ENCODE measurements at regions of chr16 and their contacts with region 1.

Region 1: GRCh38 chr16:2777231-2777902 is at the start of gene ELOB:
- DNase-seq: peak; percentile 46 to 88
- H3K4me3 ChIP-seq: peak within 1 kb of the TSS; percentile 78
- H3K27ac ChIP-seq: peak within 1 kb of the TSS; percentile 94
- H3K4me1 ChIP-seq: peaks cover 20% of the 10 kb centered on the region
- H3K27me3 ChIP-seq: no peaks in the 10 kb centered on the region
- CTCF ChIP-seq: no peak
- total RNA-seq, gene ELOB: 259 and 401 TPM in 2 replicates

Region 2: GRCh38 chr16:1913327-1914083 is 863.9 kb before region 1 on chr16:
- CTCF ChIA-PET with region 1: no interaction called
- POLR2A ChIA-PET with region 1: no interaction called
- intact Hi-C with region 1: no loop called
- DNase-seq: peak; percentile 72 to 80
- H3K4me3 ChIP-seq: no peak overlapping the region
- H3K27ac ChIP-seq: no peak overlapping the region
- H3K4me1 ChIP-seq: peaks cover 34% of the 10 kb centered on the region
- H3K27me3 ChIP-seq: 0 out of 2 replicates have a peak, but pooled peaks cover 5% of the 10 kb centered on the region
- CTCF ChIP-seq: no peak

Region 3: DNA sequence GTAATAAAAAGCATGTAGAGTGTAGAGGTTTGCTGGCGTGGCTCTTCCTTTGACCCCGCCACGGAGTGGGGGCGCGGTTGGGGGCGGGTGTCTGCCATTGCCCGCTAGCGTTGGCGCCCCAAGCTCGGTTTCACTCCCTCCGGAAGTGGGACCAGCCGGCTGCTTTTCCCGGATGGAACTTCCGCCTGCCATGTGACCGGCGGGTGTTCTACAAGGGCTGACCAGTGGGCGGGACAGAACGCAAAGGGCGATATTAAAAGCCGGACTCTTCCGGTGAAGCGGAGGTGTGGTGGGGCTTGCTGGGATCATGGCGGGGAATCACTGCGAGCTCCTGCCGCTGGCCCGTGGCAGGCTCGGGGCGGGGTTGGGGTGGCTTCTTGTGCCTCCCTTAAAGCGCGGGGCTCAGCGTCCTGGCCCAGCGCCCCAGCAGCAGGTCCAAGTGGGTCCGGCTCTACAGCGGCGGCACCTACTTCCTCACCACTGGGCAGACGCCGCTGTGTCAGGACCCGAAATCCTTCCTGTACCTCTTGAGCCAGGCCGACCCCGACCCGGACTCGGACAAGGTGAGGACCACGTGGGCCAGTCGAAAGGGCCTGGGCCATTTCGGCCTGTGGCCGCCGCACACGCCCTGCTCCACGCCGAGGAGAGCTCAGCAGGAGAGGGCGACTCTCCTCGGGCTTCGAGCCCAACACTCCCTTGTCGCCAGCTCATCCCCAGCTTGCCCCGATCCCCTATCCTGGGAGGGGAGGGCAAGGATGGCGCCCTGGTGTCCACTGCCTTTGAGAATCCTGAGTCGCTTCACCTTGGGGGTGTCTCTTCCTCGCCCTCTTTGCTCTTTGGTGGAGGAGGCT is 174.0 kb before region 1 on chr16:
- CTCF ChIA-PET with region 1: no interaction called
- POLR2A ChIA-PET with region 1: no interaction called
- intact Hi-C with region 1: no loop called
- DNase-seq: peak; percentile 92 to 98
- H3K4me3 ChIP-seq: peak overlapping the region; percentile 79
- H3K27ac ChIP-seq: peak overlapping the region; percentile 56
- H3K4me1 ChIP-seq: peaks cover 7% of the 10 kb centered on the region
- H3K27me3 ChIP-seq: no peaks in the 10 kb centered on the region
- CTCF ChIP-seq: no peak

Region 4: DNA sequence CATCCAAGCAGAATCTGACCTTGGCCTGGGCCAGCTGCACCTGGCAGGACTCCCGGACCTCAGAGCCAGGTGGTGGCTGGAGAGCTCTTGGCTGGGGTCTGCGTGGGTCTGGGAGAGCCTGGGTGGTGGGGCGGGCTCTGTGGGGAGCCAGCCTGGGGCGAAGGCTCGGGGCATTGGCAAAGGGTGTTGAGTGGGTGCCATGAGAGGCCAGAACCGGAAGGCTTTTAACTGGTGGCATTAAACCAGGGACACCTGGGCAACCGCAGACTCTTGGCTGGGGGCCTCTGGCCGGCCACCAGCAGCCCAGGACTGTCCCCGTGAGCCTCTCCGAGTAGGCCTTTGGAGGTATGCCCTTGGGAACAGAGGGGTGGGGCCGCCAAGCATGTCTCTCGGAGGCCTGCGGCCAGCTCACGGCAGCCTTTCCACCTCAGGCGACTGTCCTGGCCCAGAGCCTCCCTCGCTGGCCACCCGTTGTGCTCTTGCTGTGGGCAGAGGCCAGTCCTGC is 74.1 kb before region 1 on chr16:
- CTCF ChIA-PET with region 1: no interaction called
- POLR2A ChIA-PET with region 1: no interaction called
- intact Hi-C with region 1: no loop called
- DNase-seq: no peak
- H3K4me3 ChIP-seq: no peak overlapping the region
- H3K27ac ChIP-seq: no peak overlapping the region
- H3K4me1 ChIP-seq: no peaks in the 10 kb centered on the region
- H3K27me3 ChIP-seq: no peaks in the 10 kb centered on the region
- CTCF ChIP-seq: no peak

Region 5: DNA sequence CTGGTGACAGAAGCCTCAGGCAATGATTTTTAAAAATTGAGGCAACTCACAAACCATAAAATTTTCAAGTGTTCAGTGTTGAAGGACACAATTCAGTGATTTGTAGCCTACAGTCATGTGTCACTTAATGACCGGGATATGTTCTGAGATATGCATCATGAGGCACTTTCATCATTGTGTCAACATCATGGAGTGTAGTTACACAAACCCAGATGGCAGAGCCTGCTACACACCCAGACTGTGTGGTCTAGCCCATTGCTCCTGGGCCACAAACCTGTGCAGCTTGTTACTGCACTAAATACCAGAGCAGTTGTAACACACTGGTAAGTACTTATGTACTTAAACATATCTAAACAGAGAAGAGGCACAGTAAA is 22.5 kb after region 1 on chr16:
- CTCF ChIA-PET with region 1: no interaction called
- POLR2A ChIA-PET with region 1: interaction called, 5 read pairs
- intact Hi-C with region 1: loop called (anchors 2 kb)
- DNase-seq: peak in 1 of 2 experiments; percentile 87
- H3K4me3 ChIP-seq: no peak overlapping the region
- H3K27ac ChIP-seq: peak overlapping the region; percentile 27
- H3K4me1 ChIP-seq: peaks cover 36% of the 10 kb centered on the region
- H3K27me3 ChIP-seq: no peaks in the 10 kb centered on the region
- CTCF ChIP-seq: no peak

Region 6: DNA sequence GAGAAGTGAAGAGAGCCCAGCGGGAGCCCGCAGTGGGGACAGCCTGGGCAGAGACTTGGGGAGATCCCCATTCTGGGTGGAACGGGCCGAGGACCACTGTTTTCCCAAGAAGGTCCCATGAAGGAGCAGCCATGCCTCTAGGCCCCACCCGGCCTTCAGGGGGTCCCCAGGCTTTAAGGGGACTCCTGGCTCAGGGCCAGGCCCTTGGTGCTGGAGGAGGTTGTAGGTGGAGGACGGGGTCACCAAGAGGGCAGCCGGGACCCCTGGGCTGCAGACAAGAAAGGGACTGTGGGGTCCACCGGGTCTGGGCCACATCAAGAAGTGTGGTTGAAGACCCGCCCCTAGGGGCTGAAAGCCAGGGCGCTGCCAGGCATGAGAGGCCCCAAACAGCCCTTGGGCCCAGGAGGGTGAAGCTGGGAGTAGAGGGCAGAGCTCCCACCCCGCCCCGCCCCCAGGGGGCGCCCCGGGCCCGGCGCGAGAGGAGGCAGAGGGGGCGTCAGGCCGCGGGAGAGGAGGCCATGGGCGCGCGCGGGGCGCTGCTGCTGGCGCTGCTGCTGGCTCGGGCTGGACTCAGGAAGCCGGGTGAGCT is 39.5 kb after region 1 on chr16 and contains the start of gene PRSS21:
- CTCF ChIA-PET with region 1: no interaction called
- POLR2A ChIA-PET with region 1: no interaction called
- intact Hi-C with region 1: loop called (anchors 5 kb)
- DNase-seq: peak; percentile 38 to 75
- H3K4me3 ChIP-seq: peak within 1 kb of the TSS; percentile 81
- H3K27ac ChIP-seq: no peak within 1 kb of the TSS
- H3K4me1 ChIP-seq: peaks cover 28% of the 10 kb centered on the region
- H3K27me3 ChIP-seq: no peaks in the 10 kb centered on the region
- CTCF ChIP-seq: peak; percentile 73
- total RNA-seq, gene PRSS21: 61.2 and 77.4 TPM in 2 replicates

Region 7: DNA sequence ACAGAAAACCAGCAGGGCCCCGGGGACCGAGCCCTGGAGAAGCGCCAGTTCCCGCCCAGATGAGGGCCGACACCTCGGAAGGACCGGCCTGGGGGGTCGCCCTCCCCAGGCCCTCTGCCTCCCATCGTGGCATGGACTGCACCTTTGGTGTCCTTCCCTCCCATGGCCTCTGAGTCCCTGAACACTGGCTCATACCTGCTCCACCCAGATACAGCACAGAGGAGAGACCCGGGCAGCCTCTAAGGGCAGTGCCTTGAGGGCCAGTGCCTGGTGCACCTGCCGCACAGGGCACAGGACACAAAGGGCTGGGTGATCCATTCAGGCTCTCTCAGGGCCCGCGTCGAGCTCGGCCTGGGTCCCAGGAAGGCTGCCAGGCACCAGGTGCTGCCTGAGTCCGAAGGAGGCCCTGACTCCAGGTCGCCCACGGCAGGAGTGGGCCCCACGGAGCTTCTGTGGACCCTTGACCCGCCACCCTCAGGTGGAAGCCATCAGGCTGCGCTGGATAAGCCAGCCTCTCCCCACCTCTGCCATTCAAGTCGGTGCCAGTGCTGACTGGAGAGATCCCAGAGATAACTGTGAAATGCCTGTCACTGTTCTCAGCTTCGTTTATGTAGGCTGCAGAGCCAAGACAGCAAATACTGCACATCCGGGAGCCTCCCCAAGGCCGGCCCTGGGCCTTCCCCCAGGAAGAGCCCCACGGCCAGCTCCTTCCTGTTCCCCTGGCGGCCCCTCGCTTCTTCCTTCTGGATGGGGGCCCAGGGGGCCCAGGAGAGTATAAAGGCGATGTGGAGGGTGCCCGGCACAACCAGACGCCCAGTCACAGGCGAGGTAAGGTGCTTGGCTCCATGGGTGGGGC is 52.4 kb after region 1 on chr16 and contains the start of gene ZG16B:
- CTCF ChIA-PET with region 1: no interaction called
- POLR2A ChIA-PET with region 1: interaction called, 7 read pairs
- intact Hi-C with region 1: loop called (anchors 1 kb)
- DNase-seq: peak; percentile 77
- H3K4me3 ChIP-seq: no peak within 1 kb of the TSS
- H3K27ac ChIP-seq: peak within 1 kb of the TSS; percentile 53; the same call in 1 of the 2 replicates
- H3K4me1 ChIP-seq: peaks cover 14% of the 10 kb centered on the region
- H3K27me3 ChIP-seq: no peaks in the 10 kb centered on the region
- CTCF ChIP-seq: no peak
- total RNA-seq, gene ZG16B: 19.9 and 23.4 TPM in 2 replicates